HEK293 (cell line): ENCODE measurements at regions of chr5 and their contacts with region 1.

Region 1: DNA sequence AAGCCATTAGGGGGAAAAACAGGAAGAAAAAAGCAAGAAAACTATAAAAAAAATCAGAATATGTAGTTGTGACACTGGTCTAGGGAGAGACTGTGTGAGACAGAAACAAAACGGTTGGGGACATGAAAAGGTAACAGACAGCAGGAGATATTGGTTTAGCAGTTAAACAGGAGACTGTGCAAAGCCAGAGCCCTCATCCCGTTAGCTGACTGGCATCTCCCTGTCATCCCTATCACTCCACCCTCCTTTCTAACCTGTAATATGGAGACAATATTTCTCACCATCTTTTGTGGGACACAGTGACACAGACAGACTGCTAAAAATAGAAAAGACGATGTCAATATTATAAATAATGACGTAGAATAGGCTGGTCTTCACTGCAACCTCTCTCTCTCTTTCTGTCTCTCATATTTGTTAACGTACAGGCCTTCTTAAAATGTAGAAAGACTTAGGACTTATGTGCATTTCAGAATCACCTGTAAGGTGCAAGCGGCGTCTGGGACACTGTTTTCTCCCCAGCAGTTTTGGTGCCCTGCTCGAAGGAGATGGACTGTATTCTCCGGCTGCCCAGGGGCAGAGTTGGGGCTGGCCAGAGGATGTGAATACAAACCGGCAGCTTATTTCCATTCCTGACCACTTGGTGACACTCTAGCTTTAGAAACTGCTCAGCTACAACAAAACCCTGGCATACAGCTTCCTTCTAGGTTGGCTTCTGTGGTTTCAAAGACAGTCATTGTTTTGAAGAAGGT is 190.6 kb downstream of the MAT2B start:
- H3K4me3 ChIP-seq: no peak overlapping the region
- H3K27ac ChIP-seq: no peak overlapping the region
- H3K4me1 ChIP-seq: no peaks in the 10 kb centered on the region
- CTCF ChIP-seq: peak; percentile 42; the same call in 1 of the 2 replicates

Region 2: GRCh38 chr5:163564321-163564938 is 131.6 kb before region 1 on chr5:
- CTCF ChIA-PET with region 1: interaction called, 17 read pairs
- POLR2A ChIA-PET with region 1: no interaction called
- H3K4me3 ChIP-seq: no peak overlapping the region
- H3K27ac ChIP-seq: no peak overlapping the region
- H3K4me1 ChIP-seq: no peaks in the 10 kb centered on the region
- CTCF ChIP-seq: peak; percentile 66

Region 3: GRCh38 chr5:163595932-163596607 is 99.9 kb before region 1 on chr5:
- CTCF ChIA-PET with region 1: no interaction called
- POLR2A ChIA-PET with region 1: no interaction called
- H3K4me3 ChIP-seq: no peak overlapping the region
- H3K27ac ChIP-seq: no peak overlapping the region
- H3K4me1 ChIP-seq: no peaks in the 10 kb centered on the region
- CTCF ChIP-seq: no peak